ENCODE measurements at regions of chr2 and their contacts with region 1.

Region 1: DNA sequence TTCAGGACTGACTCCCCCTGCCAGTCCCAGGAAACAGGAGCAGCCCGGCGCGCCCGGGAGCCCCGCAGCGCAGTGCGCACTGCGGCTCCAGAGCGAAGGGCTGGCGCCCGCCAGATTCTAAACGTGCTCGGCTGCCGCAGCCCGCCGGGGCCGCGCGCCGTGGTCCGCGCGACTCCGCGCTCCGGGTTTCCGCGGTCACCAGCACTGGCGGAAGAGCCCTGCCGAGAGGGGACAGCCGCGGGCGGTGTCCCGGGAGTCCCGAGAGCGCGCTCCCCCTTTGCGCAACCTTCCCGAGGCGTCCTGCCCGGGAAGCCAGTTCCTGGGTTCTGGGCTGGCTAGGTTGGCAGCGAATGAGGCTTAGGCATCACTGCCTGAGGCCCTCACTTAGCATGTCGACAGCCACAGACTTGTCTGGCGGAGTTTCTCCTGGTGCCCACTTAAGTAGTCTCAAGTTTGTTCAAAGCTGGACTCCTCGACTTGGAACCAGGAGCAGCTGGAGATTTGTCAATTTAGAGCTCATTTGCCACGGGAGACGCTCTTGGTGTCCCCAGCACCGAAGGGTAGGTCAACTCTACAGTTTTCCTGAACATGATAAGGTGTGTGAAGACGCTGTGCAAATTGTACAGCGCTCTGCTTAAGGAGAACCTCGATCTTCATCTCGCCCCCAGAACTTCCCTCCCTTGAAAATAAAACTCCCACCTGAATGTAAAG is 1.5 kb upstream of the VSNL1 start:
- DNase-seq: peak; percentile 96
- H3K4me3 Mint-ChIP-seq: peak overlapping the region; percentile 87
- H3K27ac Mint-ChIP-seq: peak overlapping the region; percentile 85
- H3K4me1 Mint-ChIP-seq: peaks cover 28% of the 10 kb centered on the region
- H3K27me3 Mint-ChIP-seq: no peaks in the 10 kb centered on the region
- CTCF ChIP-seq: no peak

Region 2: GRCh38 chr2:17245906-17246305 is 293.1 kb before region 1 on chr2:
- CTCF ChIA-PET with region 1: no interaction called
- POLR2A ChIA-PET with region 1: no interaction called
- intact Hi-C with region 1: no loop called
- DNase-seq: peak; percentile 6
- H3K4me3 Mint-ChIP-seq: no peak overlapping the region
- H3K27ac Mint-ChIP-seq: no peak overlapping the region
- H3K4me1 Mint-ChIP-seq: no peaks in the 10 kb centered on the region
- H3K27me3 Mint-ChIP-seq: peaks cover 13% of the 10 kb centered on the region
- CTCF ChIP-seq: no peak

Region 3: DNA sequence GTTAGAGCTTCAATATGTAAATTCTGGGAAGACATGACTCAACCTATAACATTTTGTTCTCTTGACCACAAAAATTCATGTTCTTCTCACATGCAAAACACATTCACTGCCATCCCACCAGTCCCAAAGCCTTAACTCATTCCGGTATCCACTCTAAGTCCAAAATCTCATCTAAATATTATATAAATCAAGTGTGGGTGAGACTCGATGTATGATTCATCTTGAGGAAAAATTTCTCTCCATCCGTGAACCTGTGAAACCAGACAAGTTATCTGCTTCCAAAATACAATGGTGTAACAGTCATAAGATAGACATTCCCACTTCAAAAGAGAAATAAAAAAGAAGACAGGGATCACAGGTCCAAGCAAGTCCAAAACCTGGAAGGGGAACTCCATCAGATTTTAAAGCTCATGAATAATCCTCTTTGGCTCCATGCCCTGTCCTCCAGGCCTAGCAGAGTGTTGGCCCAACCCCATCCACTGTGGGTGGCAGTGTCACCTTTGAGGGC is 122.1 kb before region 1 on chr2:
- CTCF ChIA-PET with region 1: no interaction called
- POLR2A ChIA-PET with region 1: interaction called, 13 read pairs
- intact Hi-C with region 1: no loop called
- DNase-seq: peak; percentile 94
- H3K4me3 Mint-ChIP-seq: no peak overlapping the region
- H3K27ac Mint-ChIP-seq: peak overlapping the region; percentile 88
- H3K4me1 Mint-ChIP-seq: peaks cover 20% of the 10 kb centered on the region
- H3K27me3 Mint-ChIP-seq: no peaks in the 10 kb centered on the region
- CTCF ChIP-seq: no peak

Region 4: GRCh38 chr2:17470855-17471641 is 68.0 kb before region 1 on chr2:
- CTCF ChIA-PET with region 1: interaction called, 5 read pairs
- POLR2A ChIA-PET with region 1: no interaction called
- intact Hi-C with region 1: loop called (anchors 1 kb)
- DNase-seq: peak; percentile 76
- H3K4me3 Mint-ChIP-seq: no peak overlapping the region
- H3K27ac Mint-ChIP-seq: no peak overlapping the region
- H3K4me1 Mint-ChIP-seq: peaks cover 8% of the 10 kb centered on the region
- H3K27me3 Mint-ChIP-seq: no peaks in the 10 kb centered on the region
- CTCF ChIP-seq: peak; percentile 53

Region 5: DNA sequence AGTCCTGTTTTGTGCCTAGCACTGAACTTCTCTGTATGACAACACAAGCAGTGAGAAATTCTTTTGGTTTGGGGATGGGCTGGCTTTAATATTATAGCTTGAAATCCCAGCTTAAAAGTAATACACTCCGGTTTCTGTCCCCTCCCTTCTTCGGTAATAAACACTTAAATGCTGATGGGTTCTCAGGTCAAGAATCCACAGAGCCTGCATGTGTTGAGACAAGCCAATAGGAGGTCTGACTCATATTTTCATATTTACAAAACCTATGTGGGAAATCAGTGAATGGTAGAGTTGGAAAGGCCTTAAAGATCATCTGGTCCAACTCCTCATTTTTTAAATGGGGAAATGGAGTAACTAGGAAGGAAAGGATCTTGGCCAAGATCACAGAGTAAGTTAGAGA is 49.0 kb after region 1 on chr2:
- CTCF ChIA-PET with region 1: interaction called, 4 read pairs
- POLR2A ChIA-PET with region 1: interaction called, 48 read pairs
- intact Hi-C with region 1: loop called (anchors 2 kb)
- DNase-seq: peak; percentile 72
- H3K4me3 Mint-ChIP-seq: no peak overlapping the region
- H3K27ac Mint-ChIP-seq: peak overlapping the region; percentile 8
- H3K4me1 Mint-ChIP-seq: peaks cover 39% of the 10 kb centered on the region
- H3K27me3 Mint-ChIP-seq: no peaks in the 10 kb centered on the region
- CTCF ChIP-seq: no peak

Region 6: GRCh38 chr2:17646081-17646554 is 107.1 kb after region 1 on chr2:
- CTCF ChIA-PET with region 1: interaction called, 18 read pairs
- POLR2A ChIA-PET with region 1: interaction called, 53 read pairs
- intact Hi-C with region 1: loop called (anchors 1 kb)
- DNase-seq: peak; percentile 84
- H3K4me3 Mint-ChIP-seq: no peak overlapping the region
- H3K27ac Mint-ChIP-seq: no peak overlapping the region
- H3K4me1 Mint-ChIP-seq: peaks cover 31% of the 10 kb centered on the region
- H3K27me3 Mint-ChIP-seq: no peaks in the 10 kb centered on the region
- CTCF ChIP-seq: peak; percentile 73

Region 7: GRCh38 chr2:17835516-17835915 is 296.5 kb after region 1 on chr2:
- CTCF ChIA-PET with region 1: no interaction called
- POLR2A ChIA-PET with region 1: no interaction called
- intact Hi-C with region 1: no loop called
- DNase-seq: no peak
- H3K4me3 Mint-ChIP-seq: no peak overlapping the region
- H3K27ac Mint-ChIP-seq: no peak overlapping the region
- H3K4me1 Mint-ChIP-seq: peaks cover 4% of the 10 kb centered on the region
- H3K27me3 Mint-ChIP-seq: no peaks in the 10 kb centered on the region
- CTCF ChIP-seq: no peak